ENCODE measurements at regions of chr20 and their contacts with region 1.

Region 1: DNA sequence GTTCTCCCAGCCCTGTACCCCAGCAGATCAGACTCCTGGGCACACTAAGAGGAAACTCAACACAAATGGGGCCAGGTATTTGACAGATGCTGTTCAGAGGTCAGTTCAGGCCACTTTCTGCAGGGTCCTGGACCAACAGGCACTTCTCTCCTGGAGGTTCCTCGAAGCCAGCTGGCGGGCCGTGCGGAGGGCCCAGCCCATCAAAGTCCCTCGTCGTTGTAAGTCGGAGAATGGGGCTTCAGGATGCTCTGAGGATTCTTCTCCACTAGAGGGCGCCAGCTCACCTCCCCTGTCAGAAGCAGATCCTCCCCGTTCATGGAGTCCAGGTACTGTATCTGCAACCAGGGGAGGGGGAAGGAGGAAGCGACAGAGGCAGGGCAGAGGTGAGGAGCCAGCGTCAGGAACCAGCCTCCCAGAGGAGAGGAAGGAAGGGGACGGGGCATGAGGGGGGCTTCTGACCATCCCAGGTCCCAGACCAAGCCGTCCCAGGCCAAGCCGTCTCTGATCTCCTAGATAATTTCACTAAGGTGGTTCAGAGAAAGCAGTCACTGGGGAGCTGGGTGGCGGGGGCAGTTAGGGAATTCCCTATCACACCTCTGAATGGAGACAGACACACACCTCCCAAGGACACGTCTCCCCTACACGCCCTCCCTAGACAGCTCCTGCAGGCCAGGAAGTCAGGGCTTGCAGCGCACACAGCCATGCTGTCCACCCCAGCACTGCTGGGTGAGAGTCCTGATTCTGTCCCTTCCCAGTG is 11.7 kb upstream of the FAM83C start:
- DNase-seq: peak; percentile 88
- H3K4me3 Mint-ChIP-seq: no peak overlapping the region
- H3K27ac Mint-ChIP-seq: peak overlapping the region; percentile 37
- H3K4me1 Mint-ChIP-seq: peaks cover 52% of the 10 kb centered on the region
- H3K27me3 Mint-ChIP-seq: no peaks in the 10 kb centered on the region

Region 2: GRCh38 chr20:35284267-35284991 is 19.5 kb before region 1 on chr20 and contains the start of gene EIF6:
- CTCF ChIA-PET with region 1: interaction called, 12 read pairs
- POLR2A ChIA-PET with region 1: interaction called, 28 read pairs
- DNase-seq: peak; percentile 79
- H3K4me3 Mint-ChIP-seq: peak within 1 kb of the TSS; percentile 91
- H3K27ac Mint-ChIP-seq: peak within 1 kb of the TSS; percentile 89
- H3K4me1 Mint-ChIP-seq: peaks cover 36% of the 10 kb centered on the region
- H3K27me3 Mint-ChIP-seq: no peaks in the 10 kb centered on the region
- total RNA-seq, gene EIF6: 86.1 to 91.3 TPM

Region 3: DNA sequence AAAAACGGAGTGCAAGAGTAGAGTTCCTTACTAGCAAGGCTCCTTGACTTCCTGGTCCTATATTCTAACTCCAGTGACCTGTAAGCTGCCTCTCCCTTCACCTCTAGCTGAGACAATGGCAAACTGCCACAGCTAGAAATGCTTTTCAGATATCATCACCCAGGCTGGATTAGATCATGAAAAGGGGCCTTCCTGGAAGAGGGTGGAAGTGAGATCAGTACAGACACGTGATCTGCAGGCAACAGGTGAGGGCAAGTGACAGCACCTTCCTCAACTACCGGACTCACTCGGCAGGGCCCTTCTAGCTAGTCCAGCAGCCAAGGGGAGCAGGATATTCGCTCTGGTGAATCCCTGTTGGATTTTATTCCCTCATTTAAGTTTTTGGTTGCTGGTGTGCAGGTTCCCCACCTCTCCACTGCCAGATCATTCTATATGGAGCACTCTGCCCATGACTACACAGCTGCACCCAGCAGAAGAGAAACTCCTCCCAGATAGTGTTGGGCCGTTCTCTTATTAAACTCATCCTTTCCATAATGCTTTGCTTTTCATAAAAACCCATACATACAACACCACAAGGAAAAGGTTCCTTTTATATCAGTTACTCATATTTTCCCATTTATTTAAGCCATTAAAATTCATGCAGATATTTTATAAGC is 14.7 kb after region 1 on chr20:
- CTCF ChIA-PET with region 1: interaction called, 24 read pairs
- POLR2A ChIA-PET with region 1: interaction called, 6 read pairs
- DNase-seq: no peak
- H3K4me3 Mint-ChIP-seq: no peak overlapping the region
- H3K27ac Mint-ChIP-seq: no peak overlapping the region
- H3K4me1 Mint-ChIP-seq: peaks cover 49% of the 10 kb centered on the region
- H3K27me3 Mint-ChIP-seq: no peaks in the 10 kb centered on the region

Region 4: GRCh38 chr20:35329435-35330139 is 25.7 kb after region 1 on chr20:
- CTCF ChIA-PET with region 1: interaction called, 95 read pairs
- POLR2A ChIA-PET with region 1: interaction called, 7 read pairs
- DNase-seq: peak; percentile 69
- H3K4me3 Mint-ChIP-seq: no peak overlapping the region
- H3K27ac Mint-ChIP-seq: no peak overlapping the region
- H3K4me1 Mint-ChIP-seq: peaks cover 8% of the 10 kb centered on the region
- H3K27me3 Mint-ChIP-seq: no peaks in the 10 kb centered on the region

Region 5: GRCh38 chr20:35447082-35447789 is 143.3 kb after region 1 on chr20:
- CTCF ChIA-PET with region 1: interaction called, 82 read pairs
- POLR2A ChIA-PET with region 1: no interaction called
- DNase-seq: peak; percentile 92
- H3K4me3 Mint-ChIP-seq: peak overlapping the region; percentile 77
- H3K27ac Mint-ChIP-seq: no peak overlapping the region
- H3K4me1 Mint-ChIP-seq: peaks cover 7% of the 10 kb centered on the region
- H3K27me3 Mint-ChIP-seq: peaks cover 2% of the 10 kb centered on the region